Activated CD4-positive, alpha-beta memory T cell treated with anti-CD3 and anti-CD28 coated beads for 36 hours (primary cell): ENCODE measurements at regions of chr5 and their contacts with region 1.

Region 1: DNA sequence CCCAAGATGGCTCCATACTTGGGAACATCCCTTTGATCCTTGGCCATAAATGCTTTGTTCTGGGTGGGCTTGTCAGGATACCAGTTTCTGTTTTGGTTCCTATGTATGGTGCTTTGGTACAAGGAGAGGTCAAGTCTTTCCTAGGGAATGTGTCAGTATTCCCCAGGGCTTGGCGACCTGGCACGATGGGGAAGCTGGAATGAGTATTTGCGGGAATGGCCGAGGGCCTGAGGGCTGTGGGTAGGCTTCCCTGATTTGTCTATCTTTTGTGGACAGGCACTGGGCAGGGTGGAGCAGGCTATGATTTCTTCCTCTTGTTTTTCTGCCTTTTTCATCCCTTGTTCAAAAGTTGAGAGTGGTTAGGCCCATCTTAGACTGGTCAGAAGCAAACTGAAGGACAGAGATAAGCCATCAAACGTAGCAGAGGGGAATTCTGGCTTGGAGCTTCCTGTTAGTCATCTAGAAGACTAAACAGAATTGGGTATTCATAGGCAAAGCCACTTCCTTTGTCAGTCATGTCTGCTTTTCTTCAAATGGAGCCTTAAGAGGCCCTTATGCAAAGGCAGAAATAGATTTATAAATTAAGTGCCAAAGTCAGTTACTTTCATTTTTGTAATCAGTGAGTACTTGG is 13.7 kb downstream of the DOCK2 start:
- DNase-seq: no peak
- H3K4me3 Mint-ChIP-seq: peak overlapping the region; percentile 55
- H3K27ac Mint-ChIP-seq: peak overlapping the region; percentile 95
- H3K4me1 Mint-ChIP-seq: peaks cover 98% of the 10 kb centered on the region
- H3K27me3 Mint-ChIP-seq: no peaks in the 10 kb centered on the region

Region 2: GRCh38 chr5:168831383-168831782 is 819.4 kb before region 1 on chr5:
- CTCF ChIA-PET with region 1: no interaction called
- POLR2A ChIA-PET with region 1: no interaction called
- intact Hi-C with region 1: loop called (anchors 10 kb)
- DNase-seq: no peak
- H3K4me3 Mint-ChIP-seq: no peak overlapping the region
- H3K27ac Mint-ChIP-seq: no peak overlapping the region
- H3K4me1 Mint-ChIP-seq: peaks cover 7% of the 10 kb centered on the region
- H3K27me3 Mint-ChIP-seq: peaks cover 17% of the 10 kb centered on the region

Region 3: GRCh38 chr5:169670769-169671525 is 20.1 kb after region 1 on chr5:
- CTCF ChIA-PET with region 1: no interaction called
- POLR2A ChIA-PET with region 1: no interaction called
- intact Hi-C with region 1: loop called (anchors 1 kb)
- DNase-seq: peak; percentile 50
- H3K4me3 Mint-ChIP-seq: no peak overlapping the region
- H3K27ac Mint-ChIP-seq: peak overlapping the region; percentile 8
- H3K4me1 Mint-ChIP-seq: peaks cover 23% of the 10 kb centered on the region
- H3K27me3 Mint-ChIP-seq: no peaks in the 10 kb centered on the region

Region 4: GRCh38 chr5:169706758-169707691 is 56.2 kb after region 1 on chr5:
- CTCF ChIA-PET with region 1: no interaction called
- POLR2A ChIA-PET with region 1: no interaction called
- intact Hi-C with region 1: loop called (anchors 1 kb)
- DNase-seq: no peak
- H3K4me3 Mint-ChIP-seq: no peak overlapping the region
- H3K27ac Mint-ChIP-seq: peak overlapping the region; percentile 86
- H3K4me1 Mint-ChIP-seq: peaks cover 41% of the 10 kb centered on the region
- H3K27me3 Mint-ChIP-seq: no peaks in the 10 kb centered on the region

Region 5: GRCh38 chr5:170312666-170313065 is 661.9 kb after region 1 on chr5:
- CTCF ChIA-PET with region 1: no interaction called
- POLR2A ChIA-PET with region 1: no interaction called
- intact Hi-C with region 1: loop called (anchors 5 kb)
- DNase-seq: peak; percentile 88
- H3K4me3 Mint-ChIP-seq: peak overlapping the region; percentile 79
- H3K27ac Mint-ChIP-seq: peak overlapping the region; percentile 95
- H3K4me1 Mint-ChIP-seq: peaks cover 51% of the 10 kb centered on the region
- H3K27me3 Mint-ChIP-seq: no peaks in the 10 kb centered on the region